Activated CD4-positive, alpha-beta memory T cell treated with anti-CD3 and anti-CD28 coated beads for 36 hours (primary cell): ENCODE measurements at regions of chrX and their contacts with region 1.

Region 1: GRCh38 chrX:41441934-41442823 is 5.0 kb upstream of the NYX start:
- DNase-seq: peak; percentile 92
- H3K4me3 Mint-ChIP-seq: peak overlapping the region; percentile 66
- H3K27ac Mint-ChIP-seq: peak overlapping the region; percentile 77
- H3K4me1 Mint-ChIP-seq: peaks cover 16% of the 10 kb centered on the region
- H3K27me3 Mint-ChIP-seq: no peaks in the 10 kb centered on the region

Region 2: DNA sequence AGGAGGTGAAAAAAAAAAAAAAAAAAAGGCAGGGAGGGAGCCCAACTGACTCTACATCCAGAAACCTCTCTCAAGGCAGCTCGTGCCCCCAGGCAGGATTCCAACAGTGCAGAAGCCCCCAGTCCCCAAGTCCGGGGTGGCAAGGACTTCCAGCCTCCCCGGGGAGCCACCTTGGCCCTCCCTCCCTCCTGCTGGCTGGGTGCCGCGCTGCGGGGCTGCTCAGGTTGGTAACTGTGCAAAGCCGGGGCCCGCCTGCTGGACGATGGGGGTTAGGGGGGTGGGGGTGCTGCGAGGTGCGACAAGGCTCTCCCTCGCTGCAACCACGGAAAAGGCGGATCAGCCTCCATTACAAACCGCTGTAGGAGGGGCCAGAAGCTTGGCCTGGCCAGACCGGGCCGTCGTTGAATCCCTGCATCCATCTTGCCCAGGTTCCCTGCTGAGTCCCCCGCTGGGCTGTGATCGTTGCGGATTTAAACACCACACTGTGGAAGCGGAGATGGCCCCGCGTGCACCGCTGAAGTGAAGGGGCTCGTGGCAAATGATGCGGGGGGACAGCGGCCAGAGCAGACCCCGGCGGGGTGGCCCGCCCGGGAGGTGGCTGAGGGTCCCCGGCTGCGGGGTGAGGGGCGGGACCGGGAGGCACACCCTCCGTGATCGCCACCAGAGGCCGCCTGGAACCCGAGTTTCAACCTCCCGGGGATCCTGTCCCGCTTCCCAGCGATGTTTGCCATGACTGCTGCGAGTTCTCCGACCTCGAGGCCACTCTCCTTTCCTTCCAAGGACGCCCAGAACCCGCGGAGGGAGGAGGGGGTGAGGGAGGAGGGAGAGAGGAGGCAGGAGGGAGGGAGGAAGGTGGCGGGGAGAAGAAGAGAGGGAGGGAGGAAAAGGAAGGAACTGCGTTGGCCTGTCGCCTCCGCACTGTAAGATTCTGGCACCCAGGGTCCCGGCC is 166.2 kb before region 1 on chrX:
- CTCF ChIA-PET with region 1: interaction called, 3 read pairs
- POLR2A ChIA-PET with region 1: no interaction called
- intact Hi-C with region 1: loop called (anchors 1 kb)
- DNase-seq: peak; percentile 68
- H3K4me3 Mint-ChIP-seq: peak overlapping the region; percentile 75
- H3K27ac Mint-ChIP-seq: peak overlapping the region; percentile 33
- H3K4me1 Mint-ChIP-seq: no peaks in the 10 kb centered on the region
- H3K27me3 Mint-ChIP-seq: no peaks in the 10 kb centered on the region

Region 3: GRCh38 chrX:41350976-41351569 is 91.1 kb before region 1 on chrX:
- CTCF ChIA-PET with region 1: interaction called, 3 read pairs
- POLR2A ChIA-PET with region 1: no interaction called
- intact Hi-C with region 1: loop called (anchors 5 kb)
- DNase-seq: no peak
- H3K4me3 Mint-ChIP-seq: peak overlapping the region; percentile 12
- H3K27ac Mint-ChIP-seq: peak overlapping the region; percentile 71
- H3K4me1 Mint-ChIP-seq: peaks cover 49% of the 10 kb centered on the region
- H3K27me3 Mint-ChIP-seq: no peaks in the 10 kb centered on the region

Region 4: DNA sequence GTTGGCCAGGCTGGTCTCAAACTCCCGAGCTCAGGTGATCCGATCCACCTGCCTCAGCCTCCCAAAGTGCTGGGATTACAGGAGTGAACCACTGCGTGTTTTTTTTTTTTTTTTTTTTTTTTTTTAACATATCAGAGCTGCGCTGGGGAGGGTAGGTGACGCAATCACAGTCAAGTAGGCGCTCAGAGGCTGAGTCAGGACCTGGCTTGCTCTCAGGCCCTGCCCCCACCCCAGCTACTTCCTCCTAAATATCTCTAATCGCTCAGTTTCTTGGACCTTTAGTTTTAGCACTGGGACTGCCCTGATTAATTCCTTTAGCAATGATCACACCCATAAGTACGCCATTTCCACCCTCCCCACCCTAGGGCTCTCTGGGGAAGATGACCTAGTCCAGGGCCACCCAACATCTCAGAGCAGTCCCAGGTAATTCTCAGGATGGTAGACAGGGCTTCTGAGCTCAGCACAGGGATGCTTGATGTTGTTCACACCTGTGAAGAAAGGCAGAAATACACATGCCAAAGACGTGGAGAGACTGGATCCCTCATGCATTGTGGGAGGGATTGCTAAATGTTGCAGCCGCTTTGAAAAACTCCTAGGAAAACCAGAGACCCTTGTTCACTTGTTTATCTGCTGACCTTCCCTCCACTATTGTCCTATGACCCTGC is 58.0 kb before region 1 on chrX:
- CTCF ChIA-PET with region 1: interaction called, 10 read pairs
- POLR2A ChIA-PET with region 1: interaction called, 4 read pairs
- intact Hi-C with region 1: loop called (anchors 1 kb)
- DNase-seq: peak; percentile 81
- H3K4me3 Mint-ChIP-seq: peak overlapping the region; percentile 49
- H3K27ac Mint-ChIP-seq: peak overlapping the region; percentile 98
- H3K4me1 Mint-ChIP-seq: peaks cover 36% of the 10 kb centered on the region
- H3K27me3 Mint-ChIP-seq: no peaks in the 10 kb centered on the region